ENCODE measurements at regions of chr18 and their contacts with region 1.

Region 1: GRCh38 chr18:4106407-4107033 is 348.6 kb downstream of the DLGAP1 start:
- DNase-seq: peak; percentile 37 to 71 (median 53)
- ATAC-seq: peak; percentile 82
- H3K4me3 ChIP-seq: no peak overlapping the region
- H3K27ac ChIP-seq: no peak overlapping the region
- H3K4me1 ChIP-seq: no peaks in the 10 kb centered on the region
- H3K27me3 ChIP-seq: no peaks in the 10 kb centered on the region
- CTCF ChIP-seq: peak; percentile 60 to 84 (median 72)
- EP300 ChIP-seq: no peak
- POLR2A ChIP-seq: no peak
- RAD21 ChIP-seq: peak; percentile 60 to 73

Region 2: DNA sequence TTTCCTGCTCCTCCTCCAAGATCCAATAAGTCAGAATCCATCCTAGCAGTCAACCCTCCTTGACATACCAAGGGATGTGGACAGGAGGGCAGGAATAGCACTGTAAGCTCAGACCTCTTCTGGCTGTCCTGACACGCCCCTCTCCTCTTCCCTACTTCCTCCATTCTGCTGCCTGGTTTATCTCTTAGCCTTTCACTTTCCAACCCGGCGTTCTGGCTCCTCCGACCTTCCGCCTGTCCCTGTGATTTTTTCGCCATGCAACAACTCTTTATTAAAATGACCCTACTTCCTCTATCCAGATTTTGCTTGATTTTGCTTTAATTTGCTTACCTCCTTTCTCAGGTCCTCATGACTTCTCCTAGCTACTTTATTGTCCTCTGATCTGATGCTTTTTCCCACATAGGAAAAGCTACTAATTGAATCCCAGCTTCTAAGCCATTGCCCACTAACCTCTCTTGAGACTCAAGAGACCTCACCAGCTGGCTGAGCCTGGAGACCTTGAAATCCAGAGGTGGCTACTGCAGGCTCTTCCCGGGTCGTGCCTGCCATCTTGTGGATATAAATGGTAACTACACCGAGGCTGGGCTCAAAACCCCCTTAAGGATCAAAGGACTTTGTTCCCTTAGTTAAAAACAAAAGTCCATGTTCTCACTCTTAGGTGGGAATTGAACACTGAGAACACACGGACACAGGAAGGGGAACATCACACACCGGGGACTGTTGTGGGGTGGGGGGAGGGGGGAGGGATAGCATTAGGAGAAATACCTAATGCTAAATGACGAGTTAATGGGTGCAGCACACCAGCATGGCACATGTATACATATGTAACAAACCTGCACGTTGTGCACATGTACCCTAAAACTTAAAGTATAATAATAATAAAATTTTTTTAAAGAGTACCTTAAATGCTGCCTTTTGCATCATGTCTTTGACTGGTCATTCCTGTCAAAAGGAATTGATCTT is 951.1 kb after region 1 on chr18:
- CTCF ChIA-PET with region 1: interaction called, 10 read pairs
- POLR2A ChIA-PET with region 1: no interaction called
- in situ Hi-C with region 1: loop called (anchors 25 kb)
- intact Hi-C with region 1: loop called (anchors 2 kb)
- DNase-seq: peak; percentile 68 to 77 (median 72)
- ATAC-seq: peak; percentile 87
- H3K4me3 ChIP-seq: no peak overlapping the region
- H3K27ac ChIP-seq: no peak overlapping the region
- H3K4me1 ChIP-seq: no peaks in the 10 kb centered on the region
- H3K27me3 ChIP-seq: no peaks in the 10 kb centered on the region
- CTCF ChIP-seq: peak; percentile 74 to 79 (median 74)
- EP300 ChIP-seq: no peak
- POLR2A ChIP-seq: no peak
- RAD21 ChIP-seq: peak; percentile 73 to 85